ENCODE measurements at regions of chr9 and their contacts with region 1.

Region 1: GRCh38 chr9:90593625-90594024 is 49.0 kb downstream of the DIRAS2 start:
- DNase-seq: no peak
- ATAC-seq: no peak
- H3K4me3 ChIP-seq: no peak overlapping the region
- H3K27ac ChIP-seq: no peak overlapping the region
- H3K4me1 ChIP-seq: no peaks in the 10 kb centered on the region
- H3K27me3 ChIP-seq: no peaks in the 10 kb centered on the region
- CTCF ChIP-seq: no peak
- EP300 ChIP-seq: no peak
- POLR2A ChIP-seq: no peak
- RAD21 ChIP-seq: no peak

Region 2: DNA sequence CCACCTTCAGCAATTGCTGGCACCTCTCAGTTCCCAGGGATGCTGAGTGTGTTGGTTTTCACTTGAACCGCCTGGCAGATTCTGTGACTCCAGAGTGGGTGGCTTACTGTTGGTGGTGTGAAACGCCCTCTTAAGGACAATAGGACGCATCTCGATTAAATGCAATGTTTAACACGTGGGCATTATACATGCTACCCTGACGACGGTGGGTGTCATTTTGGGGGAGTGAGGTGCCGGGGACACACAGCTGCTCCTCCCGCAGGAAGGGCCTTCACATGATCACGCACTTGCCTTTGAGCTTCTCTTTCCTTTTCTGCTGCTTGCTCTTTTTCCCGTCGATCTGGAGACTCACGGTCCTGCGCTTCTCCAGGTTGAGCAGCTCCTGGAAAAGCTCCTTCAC is 19.3 kb after region 1 on chr9:
- CTCF ChIA-PET with region 1: no interaction called
- POLR2A ChIA-PET with region 1: no interaction called
- in situ Hi-C with region 1: no loop called
- intact Hi-C with region 1: loop called (anchors 1 kb)
- DNase-seq: no peak
- ATAC-seq: no peak
- H3K4me3 ChIP-seq: no peak overlapping the region
- H3K27ac ChIP-seq: no peak overlapping the region
- H3K4me1 ChIP-seq: no peaks in the 10 kb centered on the region
- H3K27me3 ChIP-seq: peaks cover 0 to 3% of the 10 kb centered on the region in 2 experiments; a peak in 1 of 5 replicates
- CTCF ChIP-seq: no peak
- EP300 ChIP-seq: no peak
- POLR2A ChIP-seq: no peak
- RAD21 ChIP-seq: no peak

Measured in HepG2 (cell line).